ENCODE measurements at regions of chr1 and their contacts with region 1.

Region 1: GRCh38 chr1:15168479-15168878 is 14.9 kb downstream of the TMEM51 start:
- DNase-seq: peak; percentile 63
- ATAC-seq: peak; percentile 82
- H3K4me3 ChIP-seq: no peak overlapping the region
- H3K27ac ChIP-seq: peak overlapping the region; percentile 47
- H3K4me1 ChIP-seq: peaks cover 13% of the 10 kb centered on the region
- H3K27me3 ChIP-seq: no peaks in the 10 kb centered on the region
- CTCF ChIP-seq: no peak
- EP300 ChIP-seq: no peak
- POLR2A ChIP-seq: no peak
- RAD21 ChIP-seq: no peak

Region 2: GRCh38 chr1:14910984-14911721 is 257.3 kb before region 1 on chr1:
- CTCF ChIA-PET with region 1: no interaction called
- POLR2A ChIA-PET with region 1: no interaction called
- RAD21 ChIA-PET with region 1: no interaction called
- SMC1A ChIA-PET with region 1: no interaction called
- in situ Hi-C with region 1: no loop called
- intact Hi-C with region 1: no loop called
- DNase-seq: no peak
- ATAC-seq: no peak
- H3K4me3 ChIP-seq: no peak overlapping the region
- H3K27ac ChIP-seq: no peak overlapping the region
- H3K4me1 ChIP-seq: peaks cover 9% of the 10 kb centered on the region
- H3K27me3 ChIP-seq: no peaks in the 10 kb centered on the region
- CTCF ChIP-seq: no peak
- EP300 ChIP-seq: no peak
- POLR2A ChIP-seq: no peak
- RAD21 ChIP-seq: no peak

Region 3: DNA sequence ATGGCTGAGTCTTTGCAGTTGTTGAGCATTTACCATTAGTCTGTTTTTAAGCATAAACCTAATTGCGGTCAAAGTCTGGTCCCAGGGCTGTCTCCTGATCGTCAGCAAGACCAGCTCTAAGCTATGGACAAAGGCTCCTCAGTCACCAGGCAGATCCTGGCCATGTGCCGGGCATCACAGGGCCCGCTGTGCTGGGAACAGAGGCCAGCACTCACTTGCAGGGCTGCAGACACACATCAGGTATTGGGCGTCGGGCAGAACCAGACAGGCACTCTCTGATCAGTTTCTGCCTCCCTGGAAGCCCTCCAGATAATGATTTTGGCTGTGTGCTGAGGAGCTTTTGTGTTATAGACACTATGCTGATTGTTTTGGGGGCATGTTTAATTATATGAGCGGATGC is 11.7 kb after region 1 on chr1:
- CTCF ChIA-PET with region 1: interaction called, 4 read pairs
- POLR2A ChIA-PET with region 1: interaction called, 5 read pairs
- RAD21 ChIA-PET with region 1: interaction called, 3 read pairs
- SMC1A ChIA-PET with region 1: interaction called, 10 read pairs
- in situ Hi-C with region 1: no loop called
- intact Hi-C with region 1: no loop called
- DNase-seq: no peak
- ATAC-seq: no peak
- H3K4me3 ChIP-seq: no peak overlapping the region
- H3K27ac ChIP-seq: no peak overlapping the region
- H3K4me1 ChIP-seq: peaks cover 34% of the 10 kb centered on the region
- H3K27me3 ChIP-seq: no peaks in the 10 kb centered on the region
- CTCF ChIP-seq: no peak
- EP300 ChIP-seq: no peak
- POLR2A ChIP-seq: no peak
- RAD21 ChIP-seq: no peak